ENCODE measurements at regions of chr19 and their contacts with region 1.

Region 1: DNA sequence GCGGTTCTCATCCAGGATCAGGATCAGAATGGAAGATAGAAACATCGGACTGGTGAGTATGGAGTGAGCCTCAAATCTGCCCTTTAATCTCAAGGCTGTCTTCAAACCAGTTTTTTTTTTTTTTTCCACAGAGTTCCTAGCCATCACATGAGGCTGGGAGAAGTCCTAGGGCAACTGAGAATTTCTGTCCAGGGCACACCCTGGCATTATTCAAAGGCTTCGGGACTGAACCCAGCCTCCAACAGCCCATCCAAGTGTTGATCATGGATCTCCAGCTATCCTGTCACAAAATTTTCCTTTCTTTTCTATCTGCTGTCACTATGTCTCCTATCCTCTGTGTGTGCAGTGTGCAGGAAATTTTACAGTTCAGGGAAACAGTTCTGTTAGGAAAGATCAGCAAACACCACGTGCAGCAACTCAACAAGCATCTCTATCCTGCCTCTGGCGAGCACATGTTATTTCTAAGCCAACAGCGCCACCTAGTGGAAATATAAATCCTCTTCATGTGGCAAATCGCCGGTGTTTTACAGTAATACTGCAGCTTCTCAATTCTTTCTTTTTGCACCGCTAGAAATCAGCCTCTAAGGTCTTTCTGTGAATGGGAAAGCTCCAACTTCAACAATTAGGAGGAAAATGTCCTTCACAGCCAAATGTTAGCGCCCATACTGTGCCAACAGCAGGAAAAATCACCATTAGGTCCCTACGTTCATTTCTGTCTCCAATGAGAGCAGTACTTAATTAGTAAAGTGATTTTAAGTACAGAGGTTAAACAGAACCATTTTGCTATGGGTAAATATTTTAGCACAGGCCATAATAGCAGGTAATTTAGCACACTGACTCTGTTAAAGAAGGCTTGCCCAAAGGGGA is 21.4 kb upstream of the ZNF181 start:
- DNase-seq: no peak
- ATAC-seq: peak; percentile 83

Region 2: GRCh38 chr19:34501339-34502320 is 211.0 kb before region 1 on chr19:
- intact Hi-C with region 1: loop called (anchors 5 kb)
- DNase-seq: peak; percentile 96
- ATAC-seq: peak; percentile 90

Region 3: GRCh38 chr19:34556488-34556887 is 156.1 kb before region 1 on chr19:
- intact Hi-C with region 1: loop called (anchors 5 kb)
- DNase-seq: no peak
- ATAC-seq: peak; percentile 70

Region 4: DNA sequence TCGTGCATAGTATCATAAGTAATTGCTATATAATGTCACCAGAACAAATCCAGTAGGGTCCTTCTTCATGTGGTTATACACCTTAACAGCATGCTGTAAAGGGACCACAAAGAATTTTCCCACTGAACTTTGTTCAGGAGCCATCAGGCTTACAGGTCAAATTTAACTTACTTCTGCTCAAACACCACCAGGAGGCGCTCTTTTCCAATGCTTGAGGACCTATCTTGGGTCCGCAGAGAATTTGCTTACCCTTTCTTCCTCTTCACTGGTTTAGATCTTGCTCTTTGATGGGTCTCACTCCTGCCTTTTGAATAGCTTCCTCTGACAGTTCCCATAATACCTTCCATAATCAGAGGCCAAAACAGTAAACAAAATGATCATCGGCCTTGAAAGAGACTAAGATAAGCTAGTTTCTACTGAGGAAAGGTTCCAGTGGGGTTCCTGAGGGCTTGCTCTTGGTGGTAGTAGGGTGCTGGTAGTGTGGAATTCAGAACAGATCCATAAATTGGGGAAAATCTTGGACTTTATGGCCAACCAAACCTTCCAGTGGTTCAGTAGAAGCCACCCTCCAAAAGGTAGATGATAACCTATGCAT is 73.0 kb before region 1 on chr19:
- intact Hi-C with region 1: loop called (anchors 2 kb)
- DNase-seq: no peak
- ATAC-seq: peak; percentile 71

Measured in Right ventricle myocardium superior (tissue), 1 donor.